ENCODE measurements at regions of chr12 and their contacts with region 1.

Region 1: GRCh38 chr12:111298582-111299436 is 70.1 kb downstream of the PHETA1 start:
- DNase-seq: peak; percentile 83
- H3K4me3 ChIP-seq: no peak overlapping the region
- H3K27ac ChIP-seq: no peak overlapping the region
- H3K4me1 ChIP-seq: no peaks in the 10 kb centered on the region
- H3K27me3 ChIP-seq: no peaks in the 10 kb centered on the region
- CTCF ChIP-seq: peak; percentile 95

Region 2: DNA sequence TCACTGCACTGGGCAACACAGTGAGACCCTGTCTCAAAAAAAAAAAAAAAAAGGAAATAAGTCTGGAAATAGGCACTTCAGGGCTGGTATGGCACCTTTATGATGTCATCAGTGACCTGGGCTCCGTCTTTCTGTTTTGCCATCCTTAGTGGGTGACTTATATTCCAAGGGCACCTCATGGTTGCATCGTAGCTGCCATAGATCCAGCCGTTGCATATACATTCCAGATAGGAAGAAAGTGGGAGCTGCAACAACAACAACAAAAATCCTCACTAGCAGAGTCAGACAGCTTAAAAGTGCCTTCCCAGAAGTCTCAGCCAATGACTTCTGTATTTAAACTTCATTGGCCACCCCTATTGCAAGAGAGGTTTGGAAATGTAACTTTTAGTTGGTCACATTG is 404.9 kb before region 1 on chr12:
- CTCF ChIA-PET with region 1: no interaction called
- POLR2A ChIA-PET with region 1: no interaction called
- intact Hi-C with region 1: loop called (anchors 2 kb)
- DNase-seq: no peak
- H3K4me3 ChIP-seq: no peak overlapping the region
- H3K27ac ChIP-seq: no peak overlapping the region
- H3K4me1 ChIP-seq: no peaks in the 10 kb centered on the region
- H3K27me3 ChIP-seq: no peaks in the 10 kb centered on the region
- CTCF ChIP-seq: no peak

Region 3: GRCh38 chr12:110937104-110937641 is 361.6 kb before region 1 on chr12:
- CTCF ChIA-PET with region 1: interaction called, 6 read pairs
- POLR2A ChIA-PET with region 1: no interaction called
- intact Hi-C with region 1: loop called (anchors 2 kb)
- DNase-seq: peak; percentile 72
- H3K4me3 ChIP-seq: no peak overlapping the region
- H3K27ac ChIP-seq: no peak overlapping the region
- H3K4me1 ChIP-seq: no peaks in the 10 kb centered on the region
- H3K27me3 ChIP-seq: no peaks in the 10 kb centered on the region
- CTCF ChIP-seq: peak; percentile 97

Region 4: DNA sequence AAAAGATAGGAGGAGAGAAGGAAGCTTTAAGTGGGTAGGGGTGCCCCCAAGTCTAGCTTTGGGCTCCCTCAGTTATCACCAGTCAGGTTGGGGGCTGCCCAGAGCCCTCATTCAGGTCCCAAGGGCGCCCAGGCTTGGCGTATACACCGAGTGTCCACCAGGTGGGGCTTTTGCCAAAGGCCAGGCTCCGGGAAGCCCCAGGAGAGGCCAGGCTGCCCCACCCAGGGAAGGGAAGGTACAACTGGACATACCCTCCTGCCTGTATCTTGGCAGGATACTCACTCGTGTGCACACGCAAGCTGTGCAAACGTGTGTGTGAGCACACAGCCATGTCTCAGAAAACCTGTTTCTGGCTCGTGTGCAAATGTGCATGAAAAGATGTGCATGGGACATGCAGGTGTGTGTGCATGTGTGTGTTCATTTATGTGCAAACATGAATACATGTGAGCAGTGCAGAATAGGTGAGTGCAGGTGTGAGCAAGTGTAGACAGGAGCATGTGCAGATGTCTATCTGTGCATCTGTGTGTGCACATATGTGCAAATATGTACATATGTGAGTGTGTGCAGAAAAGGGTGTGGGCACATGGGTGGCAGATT is 274.5 kb before region 1 on chr12:
- CTCF ChIA-PET with region 1: interaction called, 7 read pairs
- POLR2A ChIA-PET with region 1: no interaction called
- intact Hi-C with region 1: loop called (anchors 5 kb)
- DNase-seq: peak; percentile 71
- H3K4me3 ChIP-seq: no peak overlapping the region
- H3K27ac ChIP-seq: no peak overlapping the region
- H3K4me1 ChIP-seq: no peaks in the 10 kb centered on the region
- H3K27me3 ChIP-seq: no peaks in the 10 kb centered on the region
- CTCF ChIP-seq: peak; percentile 89

Region 5: DNA sequence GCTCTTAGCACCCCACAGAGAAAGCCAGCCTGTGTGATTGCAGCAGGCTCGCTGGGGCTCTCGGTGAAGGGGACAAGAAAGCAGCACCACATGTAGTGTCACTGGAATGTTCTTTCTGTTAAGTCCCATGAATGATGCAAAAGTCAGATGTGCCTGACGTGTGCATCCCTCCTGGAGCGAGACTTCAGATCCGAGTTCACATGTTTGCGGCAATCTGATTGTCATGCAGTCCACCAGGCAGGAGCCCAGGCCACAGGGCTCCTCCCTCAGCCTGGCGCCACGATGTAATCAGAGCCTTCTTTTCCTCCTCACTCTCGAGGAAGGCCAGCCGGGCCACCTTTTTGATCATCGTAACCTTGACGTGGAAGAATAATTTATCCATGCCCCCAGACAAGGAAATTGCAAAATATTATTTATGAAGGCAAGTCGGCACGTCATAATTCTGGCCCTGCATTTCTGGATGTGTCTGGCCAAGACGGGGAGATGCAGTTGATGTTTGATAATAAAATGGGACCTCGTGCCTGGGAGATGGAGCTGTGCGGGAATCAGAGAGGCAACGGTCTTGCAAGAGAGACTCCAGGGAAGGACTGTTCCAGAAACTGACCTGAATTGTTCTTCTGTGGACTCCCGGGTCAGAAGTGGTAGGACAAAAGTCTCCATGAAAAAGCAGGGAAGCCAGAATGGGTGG is 144.5 kb before region 1 on chr12:
- CTCF ChIA-PET with region 1: no interaction called
- POLR2A ChIA-PET with region 1: no interaction called
- intact Hi-C with region 1: loop called (anchors 5 kb)
- DNase-seq: no peak
- H3K4me3 ChIP-seq: no peak overlapping the region
- H3K27ac ChIP-seq: no peak overlapping the region
- H3K4me1 ChIP-seq: peaks cover 4% of the 10 kb centered on the region
- H3K27me3 ChIP-seq: no peaks in the 10 kb centered on the region
- CTCF ChIP-seq: no peak

Region 6: DNA sequence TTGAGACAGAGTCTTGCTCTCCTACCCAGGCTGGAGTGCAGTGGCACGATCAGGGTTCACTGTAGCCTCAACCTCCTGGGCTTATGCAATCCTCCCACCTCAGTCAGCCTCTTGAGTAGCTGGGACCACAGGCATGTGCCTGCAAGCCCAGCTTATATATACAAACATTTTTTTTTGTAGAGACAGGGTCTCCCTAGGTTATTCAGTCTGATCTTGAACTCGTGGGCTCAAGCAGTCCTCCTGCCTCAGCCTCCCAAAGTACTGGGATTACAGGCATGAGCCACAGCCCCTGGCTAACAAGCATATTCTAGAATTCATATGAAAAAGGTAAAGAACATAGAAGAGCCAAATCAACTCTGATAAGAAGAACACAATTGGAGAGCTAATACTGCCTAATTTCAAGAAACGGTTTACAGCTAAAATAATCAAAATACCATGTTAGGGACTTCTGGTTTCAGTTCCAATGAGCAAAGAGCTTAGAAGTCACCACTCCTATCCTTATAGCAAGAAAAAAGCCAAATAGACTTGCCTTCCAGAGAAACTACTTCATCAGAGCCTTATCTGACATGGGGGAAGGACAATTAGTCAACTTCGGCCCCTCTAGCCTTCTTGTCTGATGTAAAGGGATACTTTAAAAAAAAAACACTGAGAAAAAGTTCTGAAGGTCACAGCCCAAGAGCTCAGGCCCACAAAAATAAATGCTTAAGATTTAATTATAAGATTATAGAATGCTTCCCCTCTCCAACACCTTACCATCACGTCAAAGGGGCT is 676.5 kb after region 1 on chr12:
- CTCF ChIA-PET with region 1: no interaction called
- POLR2A ChIA-PET with region 1: no interaction called
- intact Hi-C with region 1: no loop called
- DNase-seq: no peak
- H3K4me3 ChIP-seq: no peak overlapping the region
- H3K27ac ChIP-seq: no peak overlapping the region
- H3K4me1 ChIP-seq: no peaks in the 10 kb centered on the region
- H3K27me3 ChIP-seq: no peaks in the 10 kb centered on the region
- CTCF ChIP-seq: no peak

Measured in A673 (cell line).